Breast epithelium (tissue), 4 donors: ENCODE measurements at regions of chr7 and their contacts with region 1.

Region 1: DNA sequence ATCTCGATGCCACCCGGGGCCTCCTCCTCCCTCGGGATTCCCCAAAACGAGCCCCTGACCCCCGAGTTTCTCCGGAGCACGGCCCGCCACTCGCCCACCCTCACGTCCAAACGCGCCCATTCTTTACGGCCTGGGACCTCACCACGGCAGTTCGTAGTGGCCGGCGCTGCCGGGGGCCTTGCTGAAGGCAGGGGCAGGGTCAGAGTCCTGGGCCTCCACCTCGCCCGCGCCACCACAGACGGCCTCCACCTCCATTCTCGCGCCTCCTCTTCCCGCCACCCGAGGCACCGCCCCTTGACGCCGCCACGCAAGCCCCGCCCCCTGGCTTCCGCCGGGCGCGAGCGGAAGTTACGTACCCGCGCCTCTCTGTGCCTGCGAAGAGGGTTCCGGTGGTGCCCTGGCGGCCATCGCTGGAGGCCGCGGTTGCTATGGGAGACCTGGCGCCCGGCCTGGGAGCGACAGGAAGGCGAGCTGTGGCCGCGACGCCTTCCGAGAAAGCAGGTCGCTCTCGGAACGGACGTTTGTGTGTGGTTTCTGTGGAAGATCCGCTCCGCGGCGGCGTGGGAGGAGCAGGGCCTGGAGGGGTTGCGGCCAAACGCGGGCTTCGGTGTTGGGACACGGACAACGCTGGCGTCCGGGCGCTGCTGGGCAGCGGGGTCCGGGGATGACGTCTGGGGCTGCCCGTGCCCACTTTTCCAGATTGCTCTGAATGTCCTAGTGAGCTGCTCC is at the start of gene RFC2:
- DNase-seq: peak; percentile 95 to 97
- H3K4me3 ChIP-seq: peak within 1 kb of the TSS; percentile 78 to 81 (median 81)
- H3K27ac ChIP-seq: peak within 1 kb of the TSS; percentile 97 to 99
- H3K4me1 ChIP-seq: peaks cover 0 to 6% of the 10 kb centered on the region in 2 donors
- H3K27me3 ChIP-seq: no peaks in the 10 kb centered on the region
- CTCF ChIP-seq: peak; percentile 40 to 62 (median 54)
- POLR2A ChIP-seq: peak; percentile 67
- total RNA-seq, gene RFC2: 15.4 to 25.6 (median 17.1) TPM

Region 2: DNA sequence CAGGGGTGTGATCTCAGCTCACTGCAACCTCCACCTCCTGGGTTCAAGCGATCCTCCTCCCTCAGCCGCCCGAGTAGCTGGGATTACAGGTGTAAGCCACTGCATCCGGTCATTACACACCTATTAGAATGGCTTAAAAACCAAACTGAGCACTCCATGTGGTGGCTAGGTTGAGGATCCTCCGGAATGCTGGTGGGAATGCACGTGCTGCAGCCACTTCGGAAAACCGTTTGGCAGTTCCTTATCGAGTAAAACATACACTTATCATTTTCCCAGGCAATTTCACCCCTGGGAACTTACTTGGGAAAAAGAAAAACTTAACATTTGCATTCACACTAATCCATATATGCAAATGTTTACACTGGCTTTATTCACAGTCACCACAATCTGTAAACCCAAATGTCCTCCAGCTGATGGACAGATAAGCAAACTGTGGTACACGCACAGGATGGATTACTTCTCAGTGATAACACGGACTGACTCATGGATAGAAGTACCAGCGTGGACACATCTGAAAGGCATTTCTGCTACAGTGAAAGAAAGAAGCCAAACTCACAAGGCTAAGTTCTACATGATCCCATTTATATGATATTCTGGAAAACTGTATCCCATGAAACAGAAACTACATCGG is 20.5 kb before region 1 on chr7:
- intact Hi-C with region 1: loop called (anchors 1 kb)
- DNase-seq: no peak
- H3K4me3 ChIP-seq: no peak overlapping the region
- H3K27ac ChIP-seq: no peak overlapping the region
- H3K4me1 ChIP-seq: no peaks in the 10 kb centered on the region
- H3K27me3 ChIP-seq: no peaks in the 10 kb centered on the region
- CTCF ChIP-seq: no peak
- POLR2A ChIP-seq: no peak

Region 3: DNA sequence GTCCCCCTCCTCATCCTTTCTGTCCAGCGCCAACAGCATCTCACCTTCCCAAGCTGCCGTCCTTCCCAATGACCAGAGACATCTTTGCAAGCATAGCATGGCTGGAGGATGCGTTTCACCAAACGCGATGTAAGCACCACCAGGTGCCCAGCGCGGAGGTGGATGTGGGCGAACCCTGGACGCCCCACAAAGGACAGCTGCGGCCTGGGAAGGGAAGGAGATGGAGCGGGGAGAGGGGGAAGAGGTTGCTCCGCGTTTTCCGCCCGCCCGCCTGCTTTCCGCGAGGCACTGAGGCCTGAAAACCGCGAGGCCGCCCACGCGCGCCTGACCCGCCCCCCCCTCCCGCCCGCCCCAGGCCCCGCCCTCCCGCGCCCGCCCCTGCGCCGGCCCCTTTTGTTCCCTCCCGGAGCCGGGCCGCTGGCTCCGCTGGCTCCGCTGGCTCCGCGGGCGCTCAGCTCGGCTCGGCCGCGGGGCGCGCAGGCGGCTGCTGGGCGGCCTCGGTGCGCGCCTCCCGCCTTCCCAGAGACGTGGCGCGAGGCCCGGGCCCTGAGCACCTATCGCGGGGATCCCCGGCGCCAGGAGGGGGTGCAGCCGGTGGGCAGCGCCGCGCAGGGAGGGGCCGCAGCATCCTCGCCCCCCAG is 34.8 kb after region 1 on chr7 and contains the start of gene CLIP2:
- intact Hi-C with region 1: loop called (anchors 1 kb)
- DNase-seq: peak; percentile 62 to 75
- H3K4me3 ChIP-seq: peak within 1 kb of the TSS; percentile 84 to 97 (median 89)
- H3K27ac ChIP-seq: peak within 1 kb of the TSS; percentile 58 to 76
- H3K4me1 ChIP-seq: peaks cover 0 to 3% of the 10 kb centered on the region in 2 donors
- H3K27me3 ChIP-seq: no peaks in the 10 kb centered on the region
- CTCF ChIP-seq: no peak
- POLR2A ChIP-seq: no peak
- total RNA-seq, gene CLIP2: 7.3 to 20.3 (median 13.0) TPM

Region 4: DNA sequence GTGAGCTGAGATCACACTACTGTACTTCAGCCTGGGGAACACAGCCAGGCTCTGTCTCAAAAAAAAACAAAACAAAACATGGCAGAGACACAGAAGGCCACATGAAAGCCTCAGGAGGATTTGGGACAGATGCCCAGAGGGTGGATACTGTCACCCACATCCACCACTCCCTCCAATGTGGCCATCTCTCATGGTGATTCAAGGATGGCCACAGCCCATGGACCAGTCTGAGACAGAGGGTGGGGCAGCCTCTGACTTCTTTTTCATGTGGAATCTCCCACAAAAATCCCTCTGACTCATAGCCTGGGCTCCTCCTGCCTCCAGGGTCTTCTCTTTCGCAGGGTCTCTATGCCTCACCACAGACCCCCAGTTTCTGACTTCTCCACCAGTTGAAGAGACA is 344.3 kb after region 1 on chr7:
- intact Hi-C with region 1: no loop called
- DNase-seq: no peak
- H3K4me3 ChIP-seq: no peak overlapping the region
- H3K27ac ChIP-seq: no peak overlapping the region
- H3K4me1 ChIP-seq: no peaks in the 10 kb centered on the region
- H3K27me3 ChIP-seq: no peaks in the 10 kb centered on the region
- CTCF ChIP-seq: no peak
- POLR2A ChIP-seq: no peak